ENCODE measurements at regions of chr5 and their contacts with region 1.

Region 1: GRCh38 chr5:57137401-57137800 is 36.5 kb upstream of the GPBP1 start:
- DNase-seq: no peak
- ATAC-seq: no peak
- H3K4me3 Mint-ChIP-seq: no peak overlapping the region
- H3K27ac Mint-ChIP-seq: no peak overlapping the region
- H3K4me1 Mint-ChIP-seq: no peaks in the 10 kb centered on the region
- H3K27me3 Mint-ChIP-seq: peaks cover 14% of the 10 kb centered on the region
- CTCF ChIP-seq: no peak

Region 2: DNA sequence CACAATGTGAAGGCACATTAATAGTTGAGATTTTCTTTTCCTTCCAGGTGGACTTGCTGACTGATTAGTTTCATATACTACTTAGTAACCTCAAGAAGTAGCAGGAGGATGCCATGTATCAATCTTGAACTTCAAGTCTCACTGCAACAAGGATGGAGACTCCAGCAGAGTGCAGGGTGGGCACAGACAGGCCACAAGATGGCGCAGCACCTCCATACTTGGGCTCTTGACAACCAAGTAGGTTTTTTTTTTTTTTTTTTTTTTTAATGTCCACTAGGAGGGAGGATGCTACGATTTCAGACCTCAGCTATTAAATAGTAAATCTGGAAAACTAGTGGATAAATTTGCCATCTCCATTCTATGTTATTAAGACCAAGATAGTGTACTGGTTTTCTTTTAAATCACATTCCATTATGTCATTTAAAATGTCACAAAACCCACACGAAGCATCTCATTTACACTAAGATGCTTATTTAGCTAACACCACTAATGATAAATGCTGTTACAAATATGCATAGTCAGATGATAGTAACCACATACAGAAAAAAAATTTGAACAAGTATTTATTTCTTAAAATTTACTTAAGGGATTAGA is 1201.2 kb before region 1 on chr5:
- CTCF ChIA-PET with region 1: no interaction called
- POLR2A ChIA-PET with region 1: no interaction called
- intact Hi-C with region 1: loop called (anchors 1 kb)
- DNase-seq: peak; percentile 56
- ATAC-seq: peak; percentile 93
- H3K4me3 Mint-ChIP-seq: no peak overlapping the region
- H3K27ac Mint-ChIP-seq: no peak overlapping the region
- H3K4me1 Mint-ChIP-seq: no peaks in the 10 kb centered on the region
- H3K27me3 Mint-ChIP-seq: no peaks in the 10 kb centered on the region
- CTCF ChIP-seq: peak; percentile 48

Region 3: GRCh38 chr5:56264417-56265025 is 872.9 kb before region 1 on chr5:
- CTCF ChIA-PET with region 1: interaction called, 29 read pairs
- POLR2A ChIA-PET with region 1: no interaction called
- intact Hi-C with region 1: loop called (anchors 1 kb)
- DNase-seq: no peak
- ATAC-seq: peak; percentile 60
- H3K4me3 Mint-ChIP-seq: no peak overlapping the region
- H3K27ac Mint-ChIP-seq: no peak overlapping the region
- H3K4me1 Mint-ChIP-seq: peaks cover 2% of the 10 kb centered on the region
- H3K27me3 Mint-ChIP-seq: no peaks in the 10 kb centered on the region
- CTCF ChIP-seq: no peak

Region 4: DNA sequence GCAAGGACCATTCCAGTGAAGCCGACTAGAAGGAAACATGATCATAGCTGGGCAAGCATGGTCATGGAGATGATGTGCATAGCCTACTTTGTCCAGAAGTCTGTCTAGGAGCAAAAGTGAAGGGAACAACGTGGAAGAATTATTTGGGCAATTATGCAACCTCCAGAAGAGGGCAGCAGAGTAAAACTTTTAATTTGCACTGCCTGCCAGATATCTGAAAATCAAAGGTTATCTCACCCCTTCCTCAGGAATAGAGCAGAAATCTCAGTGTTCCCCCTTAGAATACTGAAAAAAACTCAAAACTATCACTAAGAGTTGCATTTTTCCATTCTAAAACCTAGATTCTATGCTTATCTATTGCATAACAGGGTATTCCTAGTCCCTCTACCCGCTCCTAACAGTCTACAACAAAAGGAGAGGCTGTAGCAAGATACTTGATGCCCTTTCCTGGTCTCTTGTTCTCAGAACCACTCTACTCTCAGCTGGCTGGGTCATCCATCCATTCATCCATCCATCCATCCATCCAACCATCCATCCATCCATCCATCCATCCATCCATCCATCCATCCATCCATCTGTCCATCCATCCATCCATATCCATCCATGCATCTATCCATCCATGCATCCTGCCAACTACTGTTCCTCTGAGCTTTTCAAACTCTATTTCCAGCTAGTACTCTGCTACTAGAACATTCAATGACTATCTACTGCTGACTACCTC is 236.4 kb before region 1 on chr5:
- CTCF ChIA-PET with region 1: interaction called, 65 read pairs
- POLR2A ChIA-PET with region 1: no interaction called
- intact Hi-C with region 1: loop called (anchors 1 kb)
- DNase-seq: no peak
- ATAC-seq: peak; percentile 68
- H3K4me3 Mint-ChIP-seq: no peak overlapping the region
- H3K27ac Mint-ChIP-seq: no peak overlapping the region
- H3K4me1 Mint-ChIP-seq: no peaks in the 10 kb centered on the region
- H3K27me3 Mint-ChIP-seq: no peaks in the 10 kb centered on the region
- CTCF ChIP-seq: peak; percentile 10

Region 5: GRCh38 chr5:56951946-56952691 is 185.3 kb before region 1 on chr5 and contains the start of gene MIER3:
- CTCF ChIA-PET with region 1: interaction called, 12 read pairs
- POLR2A ChIA-PET with region 1: interaction called, 3 read pairs
- intact Hi-C with region 1: loop called (anchors 1 kb)
- DNase-seq: peak; percentile 75
- ATAC-seq: peak; percentile 96
- H3K4me3 Mint-ChIP-seq: peak within 1 kb of the TSS; percentile 95
- H3K27ac Mint-ChIP-seq: peak within 1 kb of the TSS; percentile 80
- H3K4me1 Mint-ChIP-seq: peaks cover 20% of the 10 kb centered on the region
- H3K27me3 Mint-ChIP-seq: peaks cover 7% of the 10 kb centered on the region
- CTCF ChIP-seq: no peak
- total RNA-seq, gene MIER3: 22.2 and 23.5 TPM in 2 replicates

Region 6: GRCh38 chr5:56993241-56993640 is 144.2 kb before region 1 on chr5:
- CTCF ChIA-PET with region 1: interaction called, 11 read pairs
- POLR2A ChIA-PET with region 1: no interaction called
- intact Hi-C with region 1: loop called (anchors 1 kb)
- DNase-seq: no peak
- ATAC-seq: no peak
- H3K4me3 Mint-ChIP-seq: no peak overlapping the region
- H3K27ac Mint-ChIP-seq: no peak overlapping the region
- H3K4me1 Mint-ChIP-seq: no peaks in the 10 kb centered on the region
- H3K27me3 Mint-ChIP-seq: no peaks in the 10 kb centered on the region
- CTCF ChIP-seq: no peak

Region 7: GRCh38 chr5:57082441-57083067 is 54.8 kb before region 1 on chr5:
- CTCF ChIA-PET with region 1: no interaction called
- POLR2A ChIA-PET with region 1: no interaction called
- intact Hi-C with region 1: no loop called
- DNase-seq: no peak
- ATAC-seq: no peak
- H3K4me3 Mint-ChIP-seq: no peak overlapping the region
- H3K27ac Mint-ChIP-seq: no peak overlapping the region
- H3K4me1 Mint-ChIP-seq: no peaks in the 10 kb centered on the region
- H3K27me3 Mint-ChIP-seq: peaks cover 10% of the 10 kb centered on the region
- CTCF ChIP-seq: no peak

Measured in activated B cell treated with CpG ODN at 0.5 μM for 24 hours (primary cell).